Calu3 (cell line): ENCODE measurements at regions of chr12 and their contacts with region 1.

Region 1: GRCh38 chr12:9049520-9050133 is 60.3 kb downstream of the KLRG1 start:
- DNase-seq: peak; percentile 46
- H3K4me3 Mint-ChIP-seq: no peak overlapping the region
- H3K27ac Mint-ChIP-seq: no peak overlapping the region
- H3K4me1 Mint-ChIP-seq: no peaks in the 10 kb centered on the region
- H3K27me3 Mint-ChIP-seq: peaks cover 37% of the 10 kb centered on the region
- CTCF ChIP-seq: peak; percentile 60

Region 2: DNA sequence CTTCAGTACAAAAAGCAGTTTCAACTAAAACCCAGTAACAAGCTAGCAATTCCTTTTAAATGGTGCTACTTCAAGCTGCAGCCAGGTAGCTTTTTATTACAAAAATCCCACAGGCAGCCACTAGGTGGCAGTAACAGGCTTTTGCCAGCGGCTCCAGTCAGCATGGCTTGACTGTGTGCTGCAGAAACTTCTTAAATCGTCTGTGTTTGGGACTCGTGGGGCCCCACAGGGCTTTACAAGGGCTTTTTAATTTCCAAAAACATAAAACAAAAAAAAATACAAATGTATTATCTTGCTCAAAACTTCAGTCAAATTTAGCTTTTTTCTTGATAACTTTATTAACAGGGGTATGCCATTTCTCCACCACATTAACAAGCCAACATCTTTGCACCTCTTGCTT is 505.3 kb before region 1 on chr12:
- CTCF ChIA-PET with region 1: interaction called, 5 read pairs
- intact Hi-C with region 1: loop called (anchors 5 kb)
- DNase-seq: peak; percentile 76
- H3K4me3 Mint-ChIP-seq: no peak overlapping the region
- H3K27ac Mint-ChIP-seq: no peak overlapping the region
- H3K4me1 Mint-ChIP-seq: peaks cover 10% of the 10 kb centered on the region
- H3K27me3 Mint-ChIP-seq: peaks cover 30% of the 10 kb centered on the region
- CTCF ChIP-seq: peak; percentile 83

Region 3: GRCh38 chr12:8662593-8662992 is 387.0 kb before region 1 on chr12 and contains the start of gene MFAP5:
- CTCF ChIA-PET with region 1: interaction called, 17 read pairs
- intact Hi-C with region 1: loop called (anchors 1 kb)
- DNase-seq: no peak
- H3K4me3 Mint-ChIP-seq: no peak within 1 kb of the TSS
- H3K27ac Mint-ChIP-seq: no peak within 1 kb of the TSS
- H3K4me1 Mint-ChIP-seq: no peaks in the 10 kb centered on the region
- H3K27me3 Mint-ChIP-seq: peaks cover 13% of the 10 kb centered on the region
- CTCF ChIP-seq: no peak
- total RNA-seq, gene MFAP5: not detected in 2 replicates

Region 4: GRCh38 chr12:8687846-8688601 is 361.6 kb before region 1 on chr12:
- CTCF ChIA-PET with region 1: no interaction called
- intact Hi-C with region 1: loop called (anchors 2 kb)
- DNase-seq: peak; percentile 44
- H3K4me3 Mint-ChIP-seq: no peak overlapping the region
- H3K27ac Mint-ChIP-seq: no peak overlapping the region
- H3K4me1 Mint-ChIP-seq: no peaks in the 10 kb centered on the region
- H3K27me3 Mint-ChIP-seq: no peaks in the 10 kb centered on the region
- CTCF ChIP-seq: no peak

Region 5: GRCh38 chr12:8780389-8780788 is 269.2 kb before region 1 on chr12:
- CTCF ChIA-PET with region 1: no interaction called
- intact Hi-C with region 1: loop called (anchors 10 kb)
- DNase-seq: peak; percentile 10
- H3K4me3 Mint-ChIP-seq: no peak overlapping the region
- H3K27ac Mint-ChIP-seq: no peak overlapping the region
- H3K4me1 Mint-ChIP-seq: no peaks in the 10 kb centered on the region
- H3K27me3 Mint-ChIP-seq: no peaks in the 10 kb centered on the region
- CTCF ChIP-seq: no peak

Region 6: GRCh38 chr12:8989413-8989812 is 60.2 kb before region 1 on chr12 and contains the start of gene KLRG1:
- CTCF ChIA-PET with region 1: no interaction called
- intact Hi-C with region 1: no loop called
- DNase-seq: no peak
- H3K4me3 Mint-ChIP-seq: no peak within 1 kb of the TSS
- H3K27ac Mint-ChIP-seq: no peak within 1 kb of the TSS
- H3K4me1 Mint-ChIP-seq: no peaks in the 10 kb centered on the region
- H3K27me3 Mint-ChIP-seq: peaks cover 3% of the 10 kb centered on the region
- CTCF ChIP-seq: no peak
- total RNA-seq, gene KLRG1: 0.38 and 0.66 TPM in 2 replicates

Region 7: GRCh38 chr12:9064201-9064814 is 14.7 kb after region 1 on chr12:
- CTCF ChIA-PET with region 1: interaction called, 14 read pairs
- intact Hi-C with region 1: no loop called
- DNase-seq: peak; percentile 70
- H3K4me3 Mint-ChIP-seq: peak overlapping the region; percentile 85
- H3K27ac Mint-ChIP-seq: peak overlapping the region; percentile 85
- H3K4me1 Mint-ChIP-seq: no peaks in the 10 kb centered on the region
- H3K27me3 Mint-ChIP-seq: no peaks in the 10 kb centered on the region
- CTCF ChIP-seq: peak; percentile 51